Activated naive CD4-positive, alpha-beta T cell treated with anti-CD3 and anti-CD28 coated beads for 36 hours (primary cell): ENCODE measurements at regions of chr9 and their contacts with region 1.

Region 1: DNA sequence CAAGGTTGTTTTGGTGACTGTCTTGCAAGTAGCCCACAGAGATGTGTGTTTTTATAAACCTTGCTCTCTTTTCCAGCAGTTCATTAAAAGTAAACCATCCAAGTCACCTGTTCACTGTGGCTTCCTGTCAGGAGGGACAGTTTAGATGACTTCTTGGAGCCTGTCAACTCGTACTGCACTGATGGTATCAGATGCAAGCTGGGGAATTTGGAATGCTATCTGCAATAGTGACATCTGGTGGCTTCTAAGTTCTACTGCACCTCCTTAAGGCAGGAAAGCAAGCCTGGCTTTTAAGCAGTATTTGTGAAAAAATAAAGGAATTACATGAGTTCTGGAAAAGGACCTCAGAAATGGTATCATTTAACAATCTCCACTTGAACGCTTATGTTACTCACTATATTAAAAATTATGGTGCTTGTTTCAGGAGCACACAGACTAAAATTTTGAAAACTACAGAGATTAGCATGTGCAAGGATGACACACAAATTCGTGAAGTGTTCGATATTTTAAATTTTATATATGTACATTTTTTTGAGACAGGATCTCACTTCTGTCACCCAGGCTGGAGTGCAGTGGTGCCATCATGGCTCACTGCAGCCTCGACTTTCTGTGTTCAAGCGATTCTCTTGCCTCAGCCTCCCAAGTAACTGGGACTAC is 164.0 kb downstream of the TTC39B start:
- DNase-seq: peak; percentile 39
- H3K4me3 Mint-ChIP-seq: no peak overlapping the region
- H3K27ac Mint-ChIP-seq: no peak overlapping the region
- H3K4me1 Mint-ChIP-seq: peaks cover 4% of the 10 kb centered on the region
- H3K27me3 Mint-ChIP-seq: no peaks in the 10 kb centered on the region

Region 2: GRCh38 chr9:14768405-14769229 is 374.4 kb before region 1 on chr9:
- CTCF ChIA-PET with region 1: no interaction called
- intact Hi-C with region 1: loop called (anchors 5 kb)
- DNase-seq: no peak
- H3K4me3 Mint-ChIP-seq: no peak overlapping the region
- H3K27ac Mint-ChIP-seq: no peak overlapping the region
- H3K4me1 Mint-ChIP-seq: peaks cover 2% of the 10 kb centered on the region
- H3K27me3 Mint-ChIP-seq: peaks cover 15% of the 10 kb centered on the region

Region 3: GRCh38 chr9:14888875-14889274 is 254.1 kb before region 1 on chr9:
- CTCF ChIA-PET with region 1: no interaction called
- intact Hi-C with region 1: loop called (anchors 5 kb)
- DNase-seq: no peak
- H3K4me3 Mint-ChIP-seq: no peak overlapping the region
- H3K27ac Mint-ChIP-seq: no peak overlapping the region
- H3K4me1 Mint-ChIP-seq: no peaks in the 10 kb centered on the region
- H3K27me3 Mint-ChIP-seq: no peaks in the 10 kb centered on the region

Region 4: GRCh38 chr9:14924899-14925235 is 218.1 kb before region 1 on chr9:
- CTCF ChIA-PET with region 1: no interaction called
- intact Hi-C with region 1: no loop called
- DNase-seq: no peak
- H3K4me3 Mint-ChIP-seq: no peak overlapping the region
- H3K27ac Mint-ChIP-seq: no peak overlapping the region
- H3K4me1 Mint-ChIP-seq: peaks cover 3% of the 10 kb centered on the region
- H3K27me3 Mint-ChIP-seq: no peaks in the 10 kb centered on the region

Region 5: GRCh38 chr9:14978022-14979000 is 164.7 kb before region 1 on chr9:
- CTCF ChIA-PET with region 1: no interaction called
- intact Hi-C with region 1: no loop called
- DNase-seq: no peak
- H3K4me3 Mint-ChIP-seq: no peak overlapping the region
- H3K27ac Mint-ChIP-seq: no peak overlapping the region
- H3K4me1 Mint-ChIP-seq: no peaks in the 10 kb centered on the region
- H3K27me3 Mint-ChIP-seq: no peaks in the 10 kb centered on the region

Region 6: GRCh38 chr9:15104826-15105420 is 38.1 kb before region 1 on chr9:
- CTCF ChIA-PET with region 1: interaction called, 4 read pairs
- intact Hi-C with region 1: loop called (anchors 1 kb)
- DNase-seq: peak; percentile 60
- H3K4me3 Mint-ChIP-seq: no peak overlapping the region
- H3K27ac Mint-ChIP-seq: no peak overlapping the region
- H3K4me1 Mint-ChIP-seq: no peaks in the 10 kb centered on the region
- H3K27me3 Mint-ChIP-seq: peaks cover 2% of the 10 kb centered on the region

Region 7: DNA sequence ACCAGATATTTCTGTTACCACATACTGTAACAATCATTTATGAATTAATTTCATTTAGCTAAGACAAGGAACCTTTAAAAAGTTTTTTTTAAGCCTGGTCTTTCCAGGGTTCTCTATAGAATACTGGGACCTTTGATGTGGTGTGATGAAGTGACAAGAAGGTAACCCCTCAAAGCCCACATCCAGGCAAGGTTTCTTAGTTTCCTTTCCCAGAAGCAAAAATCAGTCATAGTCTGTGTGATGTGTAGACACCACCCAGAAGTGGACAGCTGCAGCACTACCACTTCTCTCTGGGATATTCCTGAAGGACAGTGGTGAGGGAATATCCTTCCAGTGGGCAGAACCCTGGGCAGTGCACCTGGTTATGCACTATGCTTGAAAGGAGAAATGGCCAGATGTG is 48.4 kb after region 1 on chr9:
- CTCF ChIA-PET with region 1: no interaction called
- intact Hi-C with region 1: no loop called
- DNase-seq: peak; percentile 21
- H3K4me3 Mint-ChIP-seq: no peak overlapping the region
- H3K27ac Mint-ChIP-seq: no peak overlapping the region
- H3K4me1 Mint-ChIP-seq: peaks cover 11% of the 10 kb centered on the region
- H3K27me3 Mint-ChIP-seq: no peaks in the 10 kb centered on the region

Region 8: GRCh38 chr9:16030513-16031185 is 887.6 kb after region 1 on chr9:
- CTCF ChIA-PET with region 1: no interaction called
- intact Hi-C with region 1: no loop called
- DNase-seq: peak; percentile 33
- H3K4me3 Mint-ChIP-seq: no peak overlapping the region
- H3K27ac Mint-ChIP-seq: no peak overlapping the region
- H3K4me1 Mint-ChIP-seq: no peaks in the 10 kb centered on the region
- H3K27me3 Mint-ChIP-seq: no peaks in the 10 kb centered on the region